Mammary epithelial cell (primary cell): ENCODE measurements at regions of chr4 and their contacts with region 1.

Region 1: GRCh38 chr4:55008166-55009070 is 117.0 kb downstream of the KDR start:
- DNase-seq: no peak
- H3K4me3 ChIP-seq: no peak overlapping the region
- H3K27ac ChIP-seq: no peak overlapping the region
- H3K4me1 ChIP-seq: peaks cover 10% of the 10 kb centered on the region
- H3K27me3 ChIP-seq: no peaks in the 10 kb centered on the region
- CTCF ChIP-seq: peak; percentile 41 to 66

Region 2: DNA sequence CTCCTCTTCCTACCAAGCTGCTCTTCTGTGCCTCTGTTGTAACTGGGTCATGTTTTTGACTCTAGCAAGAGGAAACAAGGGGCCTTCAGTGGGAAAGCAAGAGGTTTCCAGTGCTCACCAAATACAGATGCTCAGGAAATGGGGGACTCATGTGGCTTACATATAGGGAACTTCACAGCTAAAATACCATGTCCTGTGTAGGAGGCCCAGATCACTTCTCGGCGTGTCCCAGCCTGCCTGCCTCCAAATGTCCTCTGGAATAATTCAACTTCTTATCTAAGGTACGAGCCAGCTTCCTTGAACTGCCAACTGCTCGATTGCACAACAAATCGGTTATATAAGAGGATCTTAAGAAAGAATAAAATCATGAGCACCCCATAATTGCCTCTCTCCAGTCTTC is 189.4 kb before region 1 on chr4:
- CTCF ChIA-PET with region 1: no interaction called
- dilution Hi-C with region 1: no loop called
- in situ Hi-C with region 1: no loop called
- intact Hi-C with region 1: no loop called
- DNase-seq: peak; percentile 21
- H3K4me3 ChIP-seq: no peak overlapping the region
- H3K27ac ChIP-seq: no peak overlapping the region
- H3K4me1 ChIP-seq: peaks cover 4% of the 10 kb centered on the region
- H3K27me3 ChIP-seq: no peaks in the 10 kb centered on the region
- CTCF ChIP-seq: no peak

Region 3: GRCh38 chr4:54945838-54946237 is 62.6 kb before region 1 on chr4:
- CTCF ChIA-PET with region 1: no interaction called
- dilution Hi-C with region 1: no loop called
- in situ Hi-C with region 1: no loop called
- intact Hi-C with region 1: no loop called
- DNase-seq: no peak
- H3K4me3 ChIP-seq: no peak overlapping the region
- H3K27ac ChIP-seq: no peak overlapping the region
- H3K4me1 ChIP-seq: no peaks in the 10 kb centered on the region
- H3K27me3 ChIP-seq: peaks cover 3% of the 10 kb centered on the region
- CTCF ChIP-seq: no peak

Region 4: DNA sequence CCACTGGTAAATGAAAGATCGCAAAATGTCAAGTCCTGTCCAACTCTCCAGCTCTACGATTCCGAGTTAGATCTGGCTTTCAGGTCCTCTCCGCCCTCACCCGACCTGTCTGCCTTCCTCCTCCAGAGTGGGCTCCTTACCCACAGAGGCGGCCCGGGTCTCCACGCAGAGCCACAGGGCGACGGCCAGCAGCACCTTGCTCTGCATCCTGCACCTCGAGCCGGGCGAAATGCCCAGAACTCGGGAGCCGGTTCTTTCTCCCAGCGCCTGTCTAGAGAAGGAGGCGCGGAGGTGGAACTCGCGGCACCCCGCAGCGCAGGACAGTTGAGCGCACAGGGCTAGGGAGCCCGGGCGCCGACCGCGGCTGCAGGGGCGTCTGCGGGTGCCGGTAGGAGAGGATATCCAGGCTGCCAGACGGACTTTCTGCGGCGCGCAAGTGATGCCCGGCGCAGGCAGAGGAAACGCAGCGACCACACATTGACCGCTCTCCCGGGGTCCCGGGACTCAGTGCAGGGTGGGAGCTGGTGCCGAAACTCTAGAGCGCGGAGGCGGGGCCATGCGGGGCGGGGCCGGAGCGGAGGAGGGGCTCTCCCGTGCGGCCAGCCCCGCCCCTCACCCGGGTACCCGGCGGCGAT is 116.8 kb after region 1 on chr4 and contains the start of gene KDR:
- CTCF ChIA-PET with region 1: no interaction called
- dilution Hi-C with region 1: no loop called
- in situ Hi-C with region 1: no loop called
- intact Hi-C with region 1: loop called (anchors 10 kb)
- DNase-seq: peak; percentile 12
- H3K4me3 ChIP-seq: peak within 1 kb of the TSS; percentile 31 to 49 (median 45)
- H3K27ac ChIP-seq: no peak within 1 kb of the TSS
- H3K4me1 ChIP-seq: peaks cover 9% of the 10 kb centered on the region
- H3K27me3 ChIP-seq: peaks cover 22% of the 10 kb centered on the region
- CTCF ChIP-seq: no peak
- total RNA-seq, gene KDR: 0.49 to 1.2 TPM

Region 5: GRCh38 chr4:55184600-55185523 is 176.4 kb after region 1 on chr4:
- CTCF ChIA-PET with region 1: interaction called, 3 read pairs
- dilution Hi-C with region 1: no loop called
- in situ Hi-C with region 1: no loop called
- intact Hi-C with region 1: loop called (anchors 2 kb)
- DNase-seq: no peak
- H3K4me3 ChIP-seq: no peak overlapping the region
- H3K27ac ChIP-seq: peak overlapping the region; percentile 45
- H3K4me1 ChIP-seq: peaks cover 20% of the 10 kb centered on the region
- H3K27me3 ChIP-seq: no peaks in the 10 kb centered on the region
- CTCF ChIP-seq: peak; percentile 51 to 77

Region 6: GRCh38 chr4:55312489-55313101 is 304.2 kb after region 1 on chr4:
- CTCF ChIA-PET with region 1: no interaction called
- dilution Hi-C with region 1: no loop called
- in situ Hi-C with region 1: loop called in 1 of 2 experiments (anchors 10 kb)
- intact Hi-C with region 1: loop called (anchors 2 kb)
- DNase-seq: peak; percentile 25
- H3K4me3 ChIP-seq: no peak overlapping the region
- H3K27ac ChIP-seq: no peak overlapping the region
- H3K4me1 ChIP-seq: no peaks in the 10 kb centered on the region
- H3K27me3 ChIP-seq: no peaks in the 10 kb centered on the region
- CTCF ChIP-seq: peak; percentile 71 to 88

Region 7: GRCh38 chr4:55321707-55322264 is 313.4 kb after region 1 on chr4:
- CTCF ChIA-PET with region 1: no interaction called
- dilution Hi-C with region 1: no loop called
- in situ Hi-C with region 1: loop called in 1 of 2 experiments (anchors 10 kb)
- intact Hi-C with region 1: loop called (anchors 2 kb)
- DNase-seq: peak; percentile 63
- H3K4me3 ChIP-seq: no peak overlapping the region
- H3K27ac ChIP-seq: no peak overlapping the region
- H3K4me1 ChIP-seq: no peaks in the 10 kb centered on the region
- H3K27me3 ChIP-seq: no peaks in the 10 kb centered on the region
- CTCF ChIP-seq: peak; percentile 61 to 73

Region 8: GRCh38 chr4:55409468-55410171 is 401.2 kb after region 1 on chr4:
- CTCF ChIA-PET with region 1: no interaction called
- dilution Hi-C with region 1: no loop called
- in situ Hi-C with region 1: no loop called
- intact Hi-C with region 1: loop called (anchors 10 kb)
- DNase-seq: no peak
- H3K4me3 ChIP-seq: no peak overlapping the region
- H3K27ac ChIP-seq: no peak overlapping the region
- H3K4me1 ChIP-seq: no peaks in the 10 kb centered on the region
- H3K27me3 ChIP-seq: no peaks in the 10 kb centered on the region
- CTCF ChIP-seq: no peak

Region 9: GRCh38 chr4:55866973-55867574 is 858.7 kb after region 1 on chr4:
- CTCF ChIA-PET with region 1: no interaction called
- dilution Hi-C with region 1: no loop called
- in situ Hi-C with region 1: no loop called
- intact Hi-C with region 1: loop called (anchors 10 kb)
- DNase-seq: peak; percentile 54
- H3K4me3 ChIP-seq: no peak overlapping the region
- H3K27ac ChIP-seq: peak overlapping the region; percentile 59
- H3K4me1 ChIP-seq: peaks cover 20% of the 10 kb centered on the region
- H3K27me3 ChIP-seq: no peaks in the 10 kb centered on the region
- CTCF ChIP-seq: peak; percentile 82 to 88